ENCODE measurements at regions of chr16 and their contacts with region 1.

Region 1: DNA sequence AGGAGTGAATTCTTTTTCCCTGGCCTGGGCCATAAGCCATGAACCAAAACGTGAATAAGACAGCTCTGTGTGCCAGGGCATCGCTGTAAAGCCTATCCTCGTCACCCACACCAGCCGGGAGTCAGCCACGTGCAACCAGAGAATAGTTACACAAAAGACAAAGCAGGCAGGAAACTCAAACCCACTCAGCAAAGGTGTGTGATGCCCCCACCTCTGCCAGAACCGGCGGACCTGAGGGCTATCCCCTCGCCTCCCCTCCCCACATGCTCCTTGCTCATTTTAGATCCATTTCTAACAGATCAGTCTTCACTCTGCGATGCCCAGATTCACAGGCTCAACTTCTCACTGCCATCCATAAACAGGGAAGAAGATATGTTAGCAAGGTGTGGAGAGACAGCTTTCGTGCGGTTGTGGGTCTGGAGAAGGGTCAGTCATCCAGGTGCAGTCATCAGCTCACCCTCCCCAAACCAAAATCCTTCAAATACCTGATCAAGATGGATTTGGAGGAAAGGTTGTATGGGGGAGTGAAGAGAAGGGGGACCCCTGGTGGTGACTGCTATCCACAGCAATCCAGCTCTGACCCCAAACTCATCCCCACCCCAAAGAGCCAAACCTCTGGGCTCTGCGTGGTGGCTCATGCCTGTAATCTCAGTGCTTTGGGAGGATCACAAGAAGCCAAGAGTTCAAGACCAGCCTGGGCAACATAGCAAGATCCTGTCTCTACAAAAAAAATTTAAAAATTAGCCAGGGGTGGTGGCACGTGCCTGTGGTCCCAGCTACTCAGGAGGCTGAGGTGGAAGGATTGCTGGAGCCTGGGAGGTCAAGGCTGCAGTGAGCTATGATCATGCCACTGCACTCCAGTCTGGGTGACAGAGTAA is 219.2 kb downstream of the C16orf78 start:
- H3K4me3 ChIP-seq: no peak overlapping the region
- H3K27ac ChIP-seq: no peak overlapping the region
- H3K4me1 ChIP-seq: no peaks in the 10 kb centered on the region
- CTCF ChIP-seq: peak; percentile 36; the same call in 1 of the 2 replicates

Region 2: DNA sequence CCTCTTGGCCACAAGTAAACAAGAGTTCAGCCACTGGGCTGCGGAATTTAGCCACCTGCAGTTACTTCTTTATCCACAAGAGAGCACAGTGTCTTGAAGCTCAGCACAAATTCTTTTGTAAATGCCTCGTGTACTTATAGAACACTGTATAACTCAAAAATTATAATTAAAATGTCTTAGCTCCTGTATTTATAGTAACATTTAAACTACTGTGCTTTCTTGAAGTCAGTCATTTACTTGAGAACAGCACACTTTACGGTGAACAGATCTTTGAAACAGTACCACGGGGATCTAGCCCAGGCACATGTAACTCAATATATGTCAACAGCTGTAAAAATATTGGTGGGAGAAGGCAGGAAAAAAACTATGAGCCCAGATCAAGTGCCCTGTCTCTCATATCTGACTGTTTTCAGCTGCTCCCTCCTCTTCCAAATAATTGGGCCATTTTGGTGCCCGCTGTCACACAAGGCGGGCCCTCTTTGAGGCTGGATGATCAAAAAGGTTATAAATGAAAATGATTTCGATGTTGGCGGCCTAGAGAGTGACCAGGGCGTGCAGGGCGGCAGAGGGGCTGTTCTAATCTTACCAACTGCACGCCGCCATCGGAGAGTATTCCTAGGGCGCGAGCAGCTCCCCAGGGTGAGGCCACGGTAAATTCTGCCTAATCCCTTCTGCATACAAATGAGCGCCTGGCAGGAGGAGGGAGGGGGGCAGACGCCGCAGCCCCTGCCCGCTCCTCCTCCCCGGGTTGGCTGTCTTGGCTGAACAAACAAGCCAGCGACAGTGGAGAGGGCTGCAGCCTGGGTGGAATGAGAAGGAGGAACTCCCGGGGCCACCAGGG is 36.0 kb before region 1 on chr16:
- CTCF ChIA-PET with region 1: interaction called, 10 read pairs
- POLR2A ChIA-PET with region 1: no interaction called
- H3K4me3 ChIP-seq: no peak overlapping the region
- H3K27ac ChIP-seq: no peak overlapping the region
- H3K4me1 ChIP-seq: no peaks in the 10 kb centered on the region; the same call in 1 of the 2 replicates
- CTCF ChIP-seq: 0 out of 2 replicates have a peak, but pooled peaks have one; percentile 27

Region 3: DNA sequence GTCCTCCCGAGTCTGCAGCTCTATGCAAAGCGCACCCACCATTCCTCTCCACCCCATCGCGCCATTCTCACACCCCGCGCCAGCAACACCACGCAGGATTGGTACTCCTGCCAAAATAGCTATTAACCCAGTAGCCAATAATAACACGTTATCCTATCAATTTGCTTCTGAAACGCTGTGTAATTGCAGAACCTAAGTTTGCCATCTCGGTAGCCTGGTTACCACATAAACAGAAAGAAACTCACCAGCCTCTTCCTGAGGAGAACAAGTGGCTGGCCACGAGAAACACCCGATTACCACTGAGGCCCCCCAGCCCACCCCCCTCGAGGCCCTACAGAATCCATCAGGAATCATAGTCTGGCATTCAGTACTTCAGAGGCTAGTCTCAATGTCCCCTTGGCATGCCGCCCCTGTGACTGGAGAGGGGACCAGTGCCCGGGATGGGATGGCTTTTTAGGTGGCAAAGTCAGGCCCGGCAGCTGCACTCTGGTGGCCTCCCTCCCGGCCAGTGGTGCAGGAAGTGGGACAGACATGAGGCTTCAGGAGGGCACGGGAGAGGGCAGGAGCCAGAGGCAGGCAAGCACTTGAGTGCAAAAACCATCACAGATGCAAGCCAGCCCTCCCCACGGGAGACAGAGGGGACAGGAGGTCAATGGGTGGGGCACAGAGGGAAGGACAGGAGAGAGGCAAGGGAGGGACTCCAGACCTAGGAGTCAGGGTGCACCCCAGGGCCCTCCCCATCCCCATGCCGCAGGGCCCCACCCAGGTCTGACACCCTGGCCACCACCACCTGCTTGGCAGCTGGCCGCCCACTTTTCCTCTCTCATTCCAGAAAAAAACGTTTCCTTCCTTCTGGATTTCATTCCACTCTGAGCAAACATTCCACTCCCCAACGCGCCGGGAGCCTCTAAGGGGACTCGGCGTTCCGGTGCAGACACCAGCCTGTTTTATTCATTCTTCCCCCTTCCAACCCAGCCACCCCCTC is 70.6 kb after region 1 on chr16:
- CTCF ChIA-PET with region 1: no interaction called
- POLR2A ChIA-PET with region 1: no interaction called
- H3K4me3 ChIP-seq: no peak overlapping the region
- H3K27ac ChIP-seq: no peak overlapping the region
- H3K4me1 ChIP-seq: no peaks in the 10 kb centered on the region
- CTCF ChIP-seq: no peak

Region 4: GRCh38 chr16:49921791-49922456 is 329.1 kb after region 1 on chr16:
- CTCF ChIA-PET with region 1: interaction called, 12 read pairs
- POLR2A ChIA-PET with region 1: no interaction called
- H3K4me3 ChIP-seq: no peak overlapping the region
- H3K27ac ChIP-seq: no peak overlapping the region
- H3K4me1 ChIP-seq: no peaks in the 10 kb centered on the region
- CTCF ChIP-seq: peak; percentile 83